ENCODE measurements at regions of chr7 and their contacts with region 1.

Region 1: DNA sequence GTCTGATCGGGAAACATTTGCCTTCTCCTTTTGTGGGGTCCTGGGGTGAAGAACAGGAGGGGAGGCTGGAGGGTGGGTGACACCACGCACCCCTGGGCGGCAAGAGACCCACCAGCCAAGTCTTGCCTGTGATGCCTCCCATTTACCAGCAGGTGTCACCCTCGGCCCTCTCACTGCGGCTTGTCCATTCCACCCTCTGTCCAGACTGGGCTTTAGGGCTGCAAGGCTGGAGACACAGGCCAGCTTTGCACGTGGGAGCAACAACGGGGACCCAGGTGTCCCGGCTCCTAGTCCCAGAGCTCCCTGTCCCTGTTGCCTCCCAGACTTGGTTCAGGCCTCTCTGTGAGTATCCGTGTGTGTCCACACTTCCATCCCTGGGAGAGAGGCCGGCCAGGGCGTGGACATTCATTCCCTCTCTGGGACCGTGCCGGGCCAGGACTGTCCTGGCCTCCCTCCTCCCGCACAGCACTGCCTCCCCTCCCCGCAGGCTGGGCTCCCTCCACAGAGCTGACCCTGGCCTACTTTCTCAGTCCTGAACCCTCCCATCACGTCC is 36.2 kb upstream of the GTF2IRD1 start:
- DNase-seq: no peak
- ATAC-seq: peak; percentile 96
- H3K4me3 ChIP-seq: no peak overlapping the region
- H3K27ac ChIP-seq: no peak overlapping the region
- H3K4me1 ChIP-seq: no peaks in the 10 kb centered on the region; the same call in 1 of the 2 replicates
- H3K27me3 ChIP-seq: no peaks in the 10 kb centered on the region
- CTCF ChIP-seq: peak; percentile 91 to 99 (median 93)
- EP300 ChIP-seq: no peak
- POLR2A ChIP-seq: no peak
- RAD21 ChIP-seq: peak; percentile 98

Region 2: DNA sequence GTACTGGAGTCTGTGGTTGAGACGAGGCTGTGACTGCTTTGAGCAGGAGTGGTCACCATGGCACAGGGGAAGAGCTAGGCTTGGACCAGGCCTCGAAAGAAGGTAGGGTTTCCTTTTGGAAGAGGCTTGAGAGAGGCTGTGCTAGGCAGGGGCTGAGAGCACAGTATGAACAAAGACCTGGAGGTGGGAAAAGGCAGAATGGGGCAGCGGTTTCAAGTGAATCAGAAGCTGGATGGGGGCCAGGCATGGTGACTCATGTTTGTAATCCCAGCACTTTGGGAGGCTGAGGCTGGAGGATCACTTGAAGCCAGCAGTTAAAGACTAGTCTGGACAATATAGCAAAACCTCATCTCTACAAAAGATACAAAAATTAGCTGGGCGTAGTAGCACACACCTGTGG is 62.4 kb before region 1 on chr7:
- CTCF ChIA-PET with region 1: no interaction called
- POLR2A ChIA-PET with region 1: no interaction called
- RAD21 ChIA-PET with region 1: no interaction called
- SMC1A ChIA-PET with region 1: no interaction called
- in situ Hi-C with region 1: no loop called
- intact Hi-C with region 1: no loop called
- DNase-seq: no peak
- ATAC-seq: no peak
- H3K4me3 ChIP-seq: no peak overlapping the region
- H3K27ac ChIP-seq: no peak overlapping the region
- H3K4me1 ChIP-seq: no peaks in the 10 kb centered on the region
- H3K27me3 ChIP-seq: no peaks in the 10 kb centered on the region
- CTCF ChIP-seq: no peak
- EP300 ChIP-seq: no peak
- POLR2A ChIP-seq: no peak
- RAD21 ChIP-seq: no peak

Region 3: DNA sequence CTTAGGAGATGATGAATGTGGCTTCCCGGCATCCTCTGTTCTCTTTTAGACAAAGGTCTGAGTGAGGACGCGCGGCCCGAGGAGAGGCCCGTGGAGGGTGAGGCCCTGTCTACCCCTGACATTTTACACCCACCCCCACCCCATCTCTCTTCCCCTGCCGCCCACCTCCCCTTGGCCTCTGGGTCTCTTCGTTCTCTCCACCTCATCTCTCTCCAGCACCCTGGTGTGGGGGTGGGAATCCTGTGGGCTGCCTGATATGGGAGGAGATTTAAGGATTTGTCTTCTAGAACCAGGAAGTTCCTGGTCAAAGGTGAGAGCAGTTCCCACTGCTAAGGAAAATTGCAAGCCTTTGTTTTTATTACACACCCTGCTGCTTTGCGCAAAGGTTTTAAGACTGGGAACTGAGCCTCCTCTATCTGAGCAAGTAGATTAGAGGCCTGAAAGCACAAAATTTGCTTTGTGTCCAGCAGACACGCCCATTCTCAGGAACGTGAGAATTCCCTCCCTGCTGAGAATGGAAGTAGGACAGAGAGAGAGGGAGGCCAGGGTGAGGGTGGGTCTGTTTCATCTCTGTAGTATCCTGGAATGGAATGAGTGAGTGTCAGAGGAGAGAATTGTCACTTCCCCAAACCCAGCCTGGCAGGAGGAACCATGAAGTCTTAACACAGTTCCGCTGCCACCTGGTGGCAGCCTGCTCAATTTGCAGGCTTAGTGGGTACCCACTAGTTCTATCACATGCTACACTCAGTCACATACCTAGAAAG is 127.4 kb after region 1 on chr7:
- CTCF ChIA-PET with region 1: interaction called, 3 read pairs
- POLR2A ChIA-PET with region 1: no interaction called
- RAD21 ChIA-PET with region 1: no interaction called
- SMC1A ChIA-PET with region 1: no interaction called
- in situ Hi-C with region 1: no loop called
- intact Hi-C with region 1: loop called (anchors 5 kb)
- DNase-seq: no peak
- ATAC-seq: peak; percentile 69
- H3K4me3 ChIP-seq: no peak overlapping the region
- H3K27ac ChIP-seq: no peak overlapping the region
- H3K4me1 ChIP-seq: no peaks in the 10 kb centered on the region
- H3K27me3 ChIP-seq: no peaks in the 10 kb centered on the region
- CTCF ChIP-seq: peak in 2 of 3 experiments; percentile 44 to 56; a peak in 4 of 6 replicates
- EP300 ChIP-seq: no peak
- POLR2A ChIP-seq: no peak
- RAD21 ChIP-seq: peak; percentile 36

Region 4: DNA sequence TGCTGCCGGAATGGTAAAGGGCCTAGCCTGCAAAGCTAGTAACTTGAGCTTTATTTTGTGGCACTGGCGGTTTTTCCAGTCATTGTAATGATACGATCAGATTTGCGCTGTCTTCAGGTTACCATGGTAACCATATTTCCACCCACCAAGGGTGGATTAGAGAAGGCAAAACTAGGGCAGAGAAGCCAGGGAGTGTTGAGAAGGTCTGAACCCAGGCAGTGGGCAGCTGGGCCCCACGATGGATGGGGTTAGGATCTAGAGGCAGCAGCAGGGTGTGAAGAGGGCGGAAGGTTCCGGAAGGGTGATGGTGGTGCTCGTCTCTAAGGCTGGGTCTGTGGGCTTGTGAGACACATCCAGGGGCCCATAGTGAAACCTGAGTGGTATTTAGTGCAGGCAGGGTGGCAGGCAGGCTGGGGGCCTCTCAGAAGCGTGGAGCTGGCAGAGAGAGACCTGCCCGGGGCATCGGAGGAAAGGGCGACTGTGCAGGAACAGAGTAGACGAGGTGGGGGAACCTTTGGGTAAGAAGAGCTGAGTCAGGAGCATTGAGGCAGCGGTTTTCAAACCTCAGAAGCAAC is 152.1 kb after region 1 on chr7:
- CTCF ChIA-PET with region 1: interaction called, 70 read pairs
- POLR2A ChIA-PET with region 1: no interaction called
- RAD21 ChIA-PET with region 1: interaction called, 13 read pairs
- SMC1A ChIA-PET with region 1: interaction called, 5 read pairs
- in situ Hi-C with region 1: no loop called
- intact Hi-C with region 1: loop called (anchors 2 kb)
- DNase-seq: no peak
- ATAC-seq: no peak
- H3K4me3 ChIP-seq: no peak overlapping the region
- H3K27ac ChIP-seq: no peak overlapping the region
- H3K4me1 ChIP-seq: no peaks in the 10 kb centered on the region
- H3K27me3 ChIP-seq: no peaks in the 10 kb centered on the region
- CTCF ChIP-seq: no peak
- EP300 ChIP-seq: no peak
- POLR2A ChIP-seq: no peak
- RAD21 ChIP-seq: no peak

Region 5: GRCh38 chr7:74709880-74710671 is 292.6 kb after region 1 on chr7:
- CTCF ChIA-PET with region 1: no interaction called
- POLR2A ChIA-PET with region 1: no interaction called
- RAD21 ChIA-PET with region 1: no interaction called
- SMC1A ChIA-PET with region 1: no interaction called
- in situ Hi-C with region 1: no loop called
- intact Hi-C with region 1: loop called (anchors 10 kb)
- DNase-seq: no peak
- ATAC-seq: no peak
- H3K4me3 ChIP-seq: no peak overlapping the region
- H3K27ac ChIP-seq: no peak overlapping the region
- H3K4me1 ChIP-seq: no peaks in the 10 kb centered on the region
- H3K27me3 ChIP-seq: no peaks in the 10 kb centered on the region
- CTCF ChIP-seq: peak; percentile 18 to 46 (median 35); a peak in 4 of 6 replicates
- EP300 ChIP-seq: no peak
- POLR2A ChIP-seq: no peak
- RAD21 ChIP-seq: no peak

Region 6: GRCh38 chr7:75048435-75049379 is 631.2 kb after region 1 on chr7:
- CTCF ChIA-PET with region 1: interaction called, 6 read pairs
- POLR2A ChIA-PET with region 1: no interaction called
- RAD21 ChIA-PET with region 1: no interaction called
- SMC1A ChIA-PET with region 1: interaction called, 5 read pairs
- in situ Hi-C with region 1: no loop called
- intact Hi-C with region 1: loop called (anchors 5 kb)
- DNase-seq: no peak
- ATAC-seq: no peak
- H3K4me3 ChIP-seq: no peak overlapping the region
- H3K27ac ChIP-seq: no peak overlapping the region
- H3K4me1 ChIP-seq: no peaks in the 10 kb centered on the region
- H3K27me3 ChIP-seq: no peaks in the 10 kb centered on the region
- CTCF ChIP-seq: no peak
- EP300 ChIP-seq: no peak
- POLR2A ChIP-seq: no peak
- RAD21 ChIP-seq: no peak